PC-9 (cell line): ENCODE measurements at regions of chr10 and their contacts with region 1.

Region 1: DNA sequence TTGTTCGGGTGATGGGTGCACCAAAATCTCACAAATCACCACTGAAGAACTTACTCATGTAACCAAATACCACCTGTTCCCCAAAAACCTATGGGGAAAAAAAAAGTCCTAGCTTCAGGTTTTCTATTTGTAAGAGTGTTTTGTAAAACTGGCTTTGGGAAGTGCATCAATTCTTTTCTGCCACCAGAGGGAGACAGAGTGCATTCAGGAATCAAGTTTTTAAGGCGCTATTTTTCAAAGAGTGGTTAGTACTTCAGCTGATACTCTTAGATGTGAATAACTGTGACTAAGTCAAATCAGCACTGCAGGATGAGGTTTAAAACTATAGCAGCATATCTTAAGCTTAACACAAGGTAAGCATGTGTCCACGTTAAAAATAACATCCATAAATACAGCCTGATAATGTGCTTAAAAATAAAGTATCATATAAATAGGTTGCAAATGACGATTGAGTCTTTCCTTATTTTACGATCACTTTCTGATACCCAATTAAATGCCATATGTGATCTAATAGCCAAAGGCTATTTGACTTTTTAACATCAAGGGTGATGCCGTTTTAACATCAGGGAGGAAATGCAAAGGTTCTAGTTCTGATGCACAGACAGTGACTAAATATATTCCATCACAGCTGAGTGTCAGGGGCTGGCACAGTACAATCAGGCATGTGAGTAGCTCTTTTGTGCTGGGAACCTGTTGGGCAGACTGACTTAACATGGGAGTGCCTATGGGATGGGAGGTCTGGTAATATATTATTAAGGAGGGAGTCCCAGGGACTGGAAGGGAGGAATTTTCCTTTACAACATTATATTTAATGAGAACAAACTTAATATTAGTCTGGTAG is 10.6 kb upstream of the LYZL2 start:
- DNase-seq: no peak
- H3K4me3 ChIP-seq: no peak overlapping the region
- H3K27ac ChIP-seq: no peak overlapping the region
- H3K4me1 ChIP-seq: peaks cover 16% of the 10 kb centered on the region
- H3K27me3 ChIP-seq: no peaks in the 10 kb centered on the region
- CTCF ChIP-seq: peak; percentile 80

Region 2: DNA sequence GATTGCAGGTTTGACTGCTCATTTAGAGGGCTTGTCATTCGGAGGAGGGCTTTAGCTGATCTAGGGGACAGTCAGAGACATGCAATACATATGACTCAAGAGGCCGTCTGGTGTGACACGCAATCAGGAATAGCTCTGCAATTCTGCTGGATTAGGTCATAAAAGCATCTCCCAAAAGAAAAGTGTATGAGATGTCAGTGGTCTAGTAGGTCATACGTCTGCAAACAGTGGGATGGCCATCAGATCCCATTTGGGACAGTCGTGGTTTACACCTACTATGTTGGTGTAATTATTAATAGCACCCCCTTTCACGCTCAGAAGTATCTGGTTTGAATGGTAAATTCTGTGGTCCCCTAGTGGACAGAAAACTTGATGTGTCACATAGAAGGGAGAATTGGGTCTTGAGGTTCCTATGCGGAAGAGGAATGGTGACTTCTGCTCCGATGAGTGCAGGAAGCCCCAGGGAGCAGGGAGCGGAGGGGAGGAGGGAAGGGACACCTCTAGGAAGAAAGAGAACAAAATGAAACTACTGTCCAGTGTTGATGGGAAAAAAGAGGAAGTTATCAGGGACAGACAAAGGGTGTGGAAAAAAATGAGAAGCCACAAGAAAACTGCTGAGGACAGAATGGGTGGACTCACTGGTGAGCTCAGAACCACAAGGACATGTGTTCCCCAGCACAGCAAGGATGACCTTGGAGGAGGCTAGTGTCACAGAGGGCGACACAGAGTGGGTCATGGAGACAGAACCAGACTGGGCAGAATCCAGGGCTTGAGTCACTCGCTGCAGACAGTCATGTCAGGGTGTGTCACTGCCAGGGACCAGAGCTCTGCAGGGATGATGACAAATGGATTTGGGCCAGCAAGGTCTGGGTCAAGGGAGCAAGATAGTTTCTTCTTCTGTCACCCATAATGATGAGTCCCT is 146.3 kb before region 1 on chr10:
- CTCF ChIA-PET with region 1: no interaction called
- POLR2A ChIA-PET with region 1: no interaction called
- intact Hi-C with region 1: no loop called
- DNase-seq: peak; percentile 49 to 63
- H3K4me3 ChIP-seq: no peak overlapping the region
- H3K27ac ChIP-seq: no peak overlapping the region
- H3K4me1 ChIP-seq: peaks cover 46% of the 10 kb centered on the region
- H3K27me3 ChIP-seq: no peaks in the 10 kb centered on the region
- CTCF ChIP-seq: no peak

Region 3: GRCh38 chr10:30510169-30510930 is 129.8 kb before region 1 on chr10:
- CTCF ChIA-PET with region 1: no interaction called
- POLR2A ChIA-PET with region 1: no interaction called
- intact Hi-C with region 1: no loop called
- DNase-seq: peak; percentile 43 to 46
- H3K4me3 ChIP-seq: no peak overlapping the region
- H3K27ac ChIP-seq: no peak overlapping the region
- H3K4me1 ChIP-seq: peaks cover 11% of the 10 kb centered on the region
- H3K27me3 ChIP-seq: no peaks in the 10 kb centered on the region
- CTCF ChIP-seq: no peak; the same call in 1 of the 2 replicates

Region 4: DNA sequence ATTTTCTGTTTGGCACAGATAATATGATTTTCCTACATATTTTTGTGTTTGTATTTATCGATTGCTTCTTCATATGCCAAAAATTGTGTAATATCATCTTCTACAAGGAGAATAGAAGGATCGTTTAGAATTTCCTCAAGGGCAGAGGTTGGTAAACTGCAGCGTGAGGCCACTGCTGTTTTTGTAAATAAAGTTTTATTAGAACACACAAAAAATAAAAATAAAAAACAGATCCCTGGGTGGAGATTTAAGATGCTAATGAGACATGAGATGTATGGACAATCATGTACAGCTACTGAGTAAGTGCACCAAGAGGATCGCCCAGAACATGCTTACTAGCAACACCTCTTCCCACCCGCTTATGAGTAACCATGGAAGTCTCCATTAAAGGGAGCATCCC is 20.2 kb before region 1 on chr10:
- CTCF ChIA-PET with region 1: no interaction called
- POLR2A ChIA-PET with region 1: interaction called, 11 read pairs
- intact Hi-C with region 1: no loop called
- DNase-seq: no peak
- H3K4me3 ChIP-seq: no peak overlapping the region
- H3K27ac ChIP-seq: no peak overlapping the region
- H3K4me1 ChIP-seq: no peaks in the 10 kb centered on the region
- H3K27me3 ChIP-seq: no peaks in the 10 kb centered on the region
- CTCF ChIP-seq: no peak

Region 5: GRCh38 chr10:30687698-30688219 is 47.6 kb after region 1 on chr10:
- CTCF ChIA-PET with region 1: no interaction called
- POLR2A ChIA-PET with region 1: no interaction called
- intact Hi-C with region 1: loop called (anchors 5 kb)
- DNase-seq: peak; percentile 38 to 80
- H3K4me3 ChIP-seq: no peak overlapping the region
- H3K27ac ChIP-seq: no peak overlapping the region
- H3K4me1 ChIP-seq: no peaks in the 10 kb centered on the region
- H3K27me3 ChIP-seq: no peaks in the 10 kb centered on the region
- CTCF ChIP-seq: peak; percentile 90

Region 6: GRCh38 chr10:30820261-30820991 is 180.3 kb after region 1 on chr10:
- CTCF ChIA-PET with region 1: interaction called, 12 read pairs
- POLR2A ChIA-PET with region 1: no interaction called
- intact Hi-C with region 1: no loop called
- DNase-seq: no peak
- H3K4me3 ChIP-seq: no peak overlapping the region
- H3K27ac ChIP-seq: no peak overlapping the region
- H3K4me1 ChIP-seq: no peaks in the 10 kb centered on the region
- H3K27me3 ChIP-seq: no peaks in the 10 kb centered on the region
- CTCF ChIP-seq: no peak